Caco-2 (cell line): ENCODE measurements at regions of chr19 and their contacts with region 1.

Region 1: DNA sequence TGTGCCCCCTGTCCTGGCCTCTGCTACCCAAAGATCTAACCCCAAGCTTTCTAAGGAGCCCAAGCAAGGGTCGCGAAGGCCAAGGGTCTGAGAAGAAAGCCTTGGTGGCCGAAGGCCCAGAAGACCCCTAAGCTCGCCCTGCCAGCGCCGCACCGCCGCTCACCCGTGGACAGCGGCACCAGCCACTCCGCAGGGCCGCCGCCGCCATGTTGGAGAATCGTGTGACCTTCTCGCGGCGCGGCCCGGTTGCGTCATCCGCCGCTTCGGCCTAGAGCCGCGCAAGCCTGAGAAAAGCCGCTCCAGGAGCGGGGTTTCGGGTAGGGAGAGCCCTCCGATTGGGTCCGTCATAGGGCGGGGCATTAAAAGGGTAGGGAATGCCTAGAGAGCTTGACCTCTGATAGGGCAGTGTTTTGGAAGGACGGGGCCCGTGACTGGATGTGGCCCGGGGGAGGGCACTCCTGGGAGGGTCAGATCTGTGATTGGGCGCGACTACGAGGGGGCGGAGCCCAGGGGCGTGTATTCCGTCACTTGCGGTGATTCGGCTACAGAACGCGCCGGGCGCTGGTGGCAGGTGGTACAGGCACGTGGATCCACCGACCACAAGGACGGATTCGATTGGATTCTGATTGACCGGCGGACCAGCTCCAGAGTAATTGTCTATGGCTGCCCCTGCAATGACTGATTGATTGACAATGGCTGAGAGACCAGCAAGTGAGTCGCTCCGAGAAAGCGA is at the start of gene TIMM44:
- DNase-seq: peak; percentile 99
- H3K4me3 ChIP-seq: peak within 1 kb of the TSS; percentile 89
- H3K4me3 Mint-ChIP-seq: peak within 1 kb of the TSS; percentile 92
- H3K27ac Mint-ChIP-seq: peak within 1 kb of the TSS; percentile 95
- H3K4me1 ChIP-seq: no peaks in the 10 kb centered on the region; the same call in 1 of the 2 replicates
- H3K4me1 Mint-ChIP-seq: peaks cover 6% of the 10 kb centered on the region
- H3K27me3 ChIP-seq: no peaks in the 10 kb centered on the region
- H3K27me3 Mint-ChIP-seq: no peaks in the 10 kb centered on the region
- CTCF ChIP-seq: no peak
- total RNA-seq, gene TIMM44: 129 and 146 TPM in 2 replicates

Region 2: GRCh38 chr19:7852851-7853769 is 90.5 kb before region 1 on chr19:
- CTCF ChIA-PET with region 1: no interaction called
- POLR2A ChIA-PET with region 1: no interaction called
- intact Hi-C with region 1: no loop called
- DNase-seq: peak; percentile 93 to 95
- H3K4me3 ChIP-seq: 0 out of 2 replicates have a peak overlapping the region, but pooled peaks have one; percentile 14
- H3K4me3 Mint-ChIP-seq: peak overlapping the region; percentile 67
- H3K27ac Mint-ChIP-seq: peak overlapping the region; percentile 86
- H3K4me1 ChIP-seq: peaks cover 11% of the 10 kb centered on the region
- H3K4me1 Mint-ChIP-seq: peaks cover 10% of the 10 kb centered on the region
- H3K27me3 ChIP-seq: no peaks in the 10 kb centered on the region
- H3K27me3 Mint-ChIP-seq: no peaks in the 10 kb centered on the region
- CTCF ChIP-seq: peak; percentile 79 to 90

Region 3: GRCh38 chr19:7868676-7869452 is 74.7 kb before region 1 on chr19:
- CTCF ChIA-PET with region 1: interaction called, 10 read pairs
- POLR2A ChIA-PET with region 1: interaction called, 15 read pairs
- intact Hi-C with region 1: no loop called
- DNase-seq: peak; percentile 92 to 94
- H3K4me3 ChIP-seq: peak overlapping the region; percentile 77
- H3K4me3 Mint-ChIP-seq: peak overlapping the region; percentile 87
- H3K27ac Mint-ChIP-seq: peak overlapping the region; percentile 89
- H3K4me1 ChIP-seq: peaks cover 7% of the 10 kb centered on the region
- H3K4me1 Mint-ChIP-seq: peaks cover 9% of the 10 kb centered on the region
- H3K27me3 ChIP-seq: no peaks in the 10 kb centered on the region; the same call in 1 of the 2 replicates
- H3K27me3 Mint-ChIP-seq: no peaks in the 10 kb centered on the region
- CTCF ChIP-seq: peak; percentile 53 to 71

Region 4: DNA sequence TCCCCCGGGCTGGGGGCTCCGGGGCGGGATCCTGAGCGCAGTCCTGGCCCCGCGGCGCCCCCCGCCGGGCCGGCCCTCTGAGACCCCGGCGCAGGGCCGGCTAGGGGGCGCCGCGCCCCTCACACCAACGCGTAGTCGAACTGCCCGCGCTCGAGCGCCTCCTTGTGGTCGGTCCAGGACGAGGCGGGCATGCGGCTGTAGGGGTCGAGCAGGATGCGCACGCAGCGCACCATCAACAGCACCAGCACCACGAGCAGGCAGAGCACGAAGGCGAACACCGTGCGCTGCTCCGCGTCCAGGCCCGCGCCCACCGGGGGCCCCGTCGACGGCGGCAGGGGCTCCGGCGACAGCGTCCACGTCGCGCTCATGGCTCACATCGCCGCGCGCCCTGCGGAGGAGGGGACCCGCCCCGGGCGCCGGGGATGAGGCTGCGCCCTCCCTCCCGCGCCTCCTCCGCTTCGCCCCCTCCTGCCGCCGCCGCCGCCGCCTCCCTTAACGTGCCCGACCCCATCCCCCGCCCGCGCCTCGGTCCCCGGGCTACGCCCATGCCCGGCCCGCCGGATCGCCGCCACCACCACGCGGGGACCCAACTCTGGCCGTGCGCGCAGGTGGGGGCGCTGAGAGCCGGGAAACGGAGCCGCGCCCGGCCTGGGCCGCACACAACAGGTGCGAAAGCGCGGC is 18.3 kb before region 1 on chr19:
- CTCF ChIA-PET with region 1: interaction called, 27 read pairs
- POLR2A ChIA-PET with region 1: interaction called, 15 read pairs
- intact Hi-C with region 1: no loop called
- DNase-seq: peak; percentile 72 to 85
- H3K4me3 ChIP-seq: peak overlapping the region; percentile 28
- H3K4me3 Mint-ChIP-seq: peak overlapping the region; percentile 82
- H3K27ac Mint-ChIP-seq: no peak overlapping the region
- H3K4me1 ChIP-seq: peaks cover 23% of the 10 kb centered on the region
- H3K4me1 Mint-ChIP-seq: peaks cover 10% of the 10 kb centered on the region
- H3K27me3 ChIP-seq: no peaks in the 10 kb centered on the region
- H3K27me3 Mint-ChIP-seq: no peaks in the 10 kb centered on the region
- CTCF ChIP-seq: peak; percentile 84

Region 5: GRCh38 chr19:8005534-8006256 is 62.1 kb after region 1 on chr19 and contains the start of gene ELAVL1:
- CTCF ChIA-PET with region 1: interaction called, 9 read pairs
- POLR2A ChIA-PET with region 1: no interaction called
- intact Hi-C with region 1: loop called (anchors 1 kb)
- DNase-seq: peak; percentile 84 to 95
- H3K4me3 ChIP-seq: peak within 1 kb of the TSS; percentile 99
- H3K4me3 Mint-ChIP-seq: peak within 1 kb of the TSS; percentile 83
- H3K27ac Mint-ChIP-seq: peak within 1 kb of the TSS; percentile 16
- H3K4me1 ChIP-seq: peaks cover 12% of the 10 kb centered on the region; the same call in 1 of the 2 replicates
- H3K4me1 Mint-ChIP-seq: peaks cover 18% of the 10 kb centered on the region
- H3K27me3 ChIP-seq: no peaks in the 10 kb centered on the region
- H3K27me3 Mint-ChIP-seq: no peaks in the 10 kb centered on the region
- CTCF ChIP-seq: no peak
- total RNA-seq, gene ELAVL1: 117 and 118 TPM in 2 replicates

Region 6: GRCh38 chr19:8075158-8076074 is 131.8 kb after region 1 on chr19:
- CTCF ChIA-PET with region 1: no interaction called
- POLR2A ChIA-PET with region 1: no interaction called
- intact Hi-C with region 1: no loop called
- DNase-seq: no peak
- H3K4me3 ChIP-seq: no peak overlapping the region
- H3K4me3 Mint-ChIP-seq: no peak overlapping the region
- H3K27ac Mint-ChIP-seq: peak overlapping the region; percentile 46
- H3K4me1 ChIP-seq: no peaks in the 10 kb centered on the region
- H3K4me1 Mint-ChIP-seq: no peaks in the 10 kb centered on the region
- H3K27me3 ChIP-seq: no peaks in the 10 kb centered on the region
- H3K27me3 Mint-ChIP-seq: no peaks in the 10 kb centered on the region
- CTCF ChIP-seq: no peak

Region 7: DNA sequence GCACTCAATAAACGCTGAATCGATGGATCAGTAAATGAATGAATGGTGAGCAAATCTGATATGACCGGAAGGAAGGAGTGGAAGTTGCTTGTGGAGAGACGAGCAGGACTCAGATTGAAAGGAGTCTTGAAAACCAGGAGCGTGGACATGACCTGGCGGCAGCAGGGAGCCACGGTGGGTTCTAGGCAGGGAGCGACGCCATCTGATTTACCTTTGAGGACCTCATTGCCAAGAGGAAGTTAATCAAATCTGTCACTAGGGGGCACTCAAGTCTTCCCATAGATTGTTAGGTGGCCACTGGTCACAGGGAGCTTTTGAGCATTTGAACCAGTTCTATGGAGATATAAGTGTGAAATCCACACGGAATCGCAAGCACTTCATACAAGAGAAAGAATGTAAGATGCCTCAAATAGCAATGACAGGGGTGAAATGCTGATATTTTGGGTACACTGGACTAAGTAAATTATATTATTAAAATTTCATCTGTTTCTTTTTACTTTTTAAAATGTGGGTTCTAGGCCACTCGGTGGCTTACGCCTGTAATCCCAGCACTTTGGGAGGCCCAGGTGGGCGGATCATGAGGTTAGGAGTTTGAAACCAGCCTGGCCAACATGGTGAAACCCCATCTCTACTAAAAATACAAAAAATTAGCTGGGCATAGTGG is 214.9 kb after region 1 on chr19:
- CTCF ChIA-PET with region 1: interaction called, 6 read pairs
- POLR2A ChIA-PET with region 1: no interaction called
- intact Hi-C with region 1: loop called (anchors 10 kb)
- DNase-seq: peak; percentile 71 to 79
- H3K4me3 ChIP-seq: no peak overlapping the region
- H3K4me3 Mint-ChIP-seq: no peak overlapping the region
- H3K27ac Mint-ChIP-seq: no peak overlapping the region
- H3K4me1 ChIP-seq: peaks cover 3% of the 10 kb centered on the region; the same call in 1 of the 2 replicates
- H3K4me1 Mint-ChIP-seq: no peaks in the 10 kb centered on the region
- H3K27me3 ChIP-seq: no peaks in the 10 kb centered on the region
- H3K27me3 Mint-ChIP-seq: no peaks in the 10 kb centered on the region
- CTCF ChIP-seq: peak; percentile 59 to 72